Ascending aorta (tissue), 2 donors: ENCODE measurements at regions of chr15 and their contacts with region 1.

Region 1: GRCh38 chr15:64640146-64640871 is 135.1 kb downstream of the RBPMS2 start:
- DNase-seq: no peak
- H3K4me3 ChIP-seq: no peak overlapping the region
- H3K27ac ChIP-seq: peak overlapping the region; percentile 24 to 39
- H3K4me1 ChIP-seq: peaks cover 7 to 12% of the 10 kb centered on the region in 2 donors
- H3K27me3 ChIP-seq: no peaks in the 10 kb centered on the region
- CTCF ChIP-seq: no peak

Region 2: GRCh38 chr15:64430000-64430735 is 210.1 kb before region 1 on chr15:
- intact Hi-C with region 1: loop called (anchors 10 kb)
- DNase-seq: no peak
- H3K4me3 ChIP-seq: no peak overlapping the region
- H3K27ac ChIP-seq: no peak overlapping the region
- H3K4me1 ChIP-seq: no peaks in the 10 kb centered on the region
- H3K27me3 ChIP-seq: no peaks in the 10 kb centered on the region
- CTCF ChIP-seq: no peak